ENCODE measurements at regions of chr7 and their contacts with region 1.

Region 1: GRCh38 chr7:121547544-121548092 is 151.5 kb upstream of the FAM3C start:
- DNase-seq: peak; percentile 76
- ATAC-seq: peak; percentile 47
- H3K4me3 ChIP-seq: no peak overlapping the region
- H3K27ac ChIP-seq: no peak overlapping the region
- H3K4me1 ChIP-seq: peaks cover 36% of the 10 kb centered on the region
- H3K27me3 ChIP-seq: no peaks in the 10 kb centered on the region
- CTCF ChIP-seq: peak; percentile 82

Region 2: GRCh38 chr7:121366852-121367431 is 180.7 kb before region 1 on chr7:
- CTCF ChIA-PET with region 1: interaction called, 7 read pairs
- POLR2A ChIA-PET with region 1: no interaction called
- intact Hi-C with region 1: loop called (anchors 1 kb)
- DNase-seq: peak; percentile 46
- ATAC-seq: peak; percentile 53
- H3K4me3 ChIP-seq: no peak overlapping the region
- H3K27ac ChIP-seq: no peak overlapping the region
- H3K4me1 ChIP-seq: peaks cover 9% of the 10 kb centered on the region
- H3K27me3 ChIP-seq: no peaks in the 10 kb centered on the region
- CTCF ChIP-seq: peak; percentile 86

Region 3: DNA sequence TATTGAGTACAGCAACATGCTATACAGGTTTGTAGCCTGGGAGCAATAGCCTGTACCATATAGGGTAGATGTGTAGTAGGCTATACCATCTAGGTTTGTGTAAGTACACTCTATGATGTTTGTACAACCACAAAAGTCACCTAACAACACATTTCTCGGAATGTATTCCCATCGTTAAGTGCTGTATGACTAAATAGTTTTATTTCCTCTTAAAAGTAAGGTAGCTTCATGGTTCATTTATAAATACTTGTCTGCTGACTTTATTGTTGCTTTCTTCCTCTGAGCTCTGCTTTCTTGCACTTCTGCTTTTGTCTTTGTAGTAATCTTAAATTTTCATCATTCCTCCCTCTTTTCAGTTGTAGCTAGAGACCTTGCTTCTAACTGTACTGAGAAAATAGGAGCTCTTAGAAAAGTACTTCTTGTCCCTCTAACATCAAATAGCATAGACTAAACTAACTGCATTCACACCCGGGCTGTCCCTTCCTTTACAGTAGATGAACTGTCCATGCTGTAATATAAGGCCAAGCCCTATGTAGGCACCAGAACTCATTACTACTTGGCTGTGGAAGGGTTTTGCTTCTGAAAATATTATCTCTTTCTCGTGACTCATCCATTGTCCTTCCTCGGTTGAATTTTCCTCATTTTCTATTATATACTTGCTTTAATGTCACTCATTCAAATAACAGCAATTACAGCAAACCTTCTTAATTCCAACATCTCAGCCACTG is 96.1 kb before region 1 on chr7:
- CTCF ChIA-PET with region 1: interaction called, 8 read pairs
- POLR2A ChIA-PET with region 1: no interaction called
- intact Hi-C with region 1: loop called (anchors 1 kb)
- DNase-seq: peak; percentile 36
- ATAC-seq: peak; percentile 72
- H3K4me3 ChIP-seq: no peak overlapping the region
- H3K27ac ChIP-seq: no peak overlapping the region
- H3K4me1 ChIP-seq: 0 out of 2 replicates have a peak, but pooled peaks cover 4% of the 10 kb centered on the region
- H3K27me3 ChIP-seq: no peaks in the 10 kb centered on the region
- CTCF ChIP-seq: no peak

Region 4: GRCh38 chr7:121493553-121493952 is 54.1 kb before region 1 on chr7:
- CTCF ChIA-PET with region 1: no interaction called
- POLR2A ChIA-PET with region 1: no interaction called
- intact Hi-C with region 1: loop called (anchors 2 kb)
- DNase-seq: no peak
- ATAC-seq: no peak
- H3K4me3 ChIP-seq: no peak overlapping the region
- H3K27ac ChIP-seq: no peak overlapping the region
- H3K4me1 ChIP-seq: peaks cover 18% of the 10 kb centered on the region
- H3K27me3 ChIP-seq: no peaks in the 10 kb centered on the region
- CTCF ChIP-seq: no peak; the same call in 1 of the 2 replicates

Region 5: GRCh38 chr7:121530227-121531174 is 17.1 kb before region 1 on chr7:
- CTCF ChIA-PET with region 1: interaction called, 3 read pairs
- POLR2A ChIA-PET with region 1: no interaction called
- intact Hi-C with region 1: loop called (anchors 1 kb)
- DNase-seq: peak; percentile 97
- ATAC-seq: peak; percentile 97
- H3K4me3 ChIP-seq: peak overlapping the region; percentile 54; the same call in 1 of the 2 replicates
- H3K27ac ChIP-seq: peak overlapping the region; percentile 98
- H3K4me1 ChIP-seq: peaks cover 28% of the 10 kb centered on the region
- H3K27me3 ChIP-seq: no peaks in the 10 kb centered on the region
- CTCF ChIP-seq: no peak

Region 6: DNA sequence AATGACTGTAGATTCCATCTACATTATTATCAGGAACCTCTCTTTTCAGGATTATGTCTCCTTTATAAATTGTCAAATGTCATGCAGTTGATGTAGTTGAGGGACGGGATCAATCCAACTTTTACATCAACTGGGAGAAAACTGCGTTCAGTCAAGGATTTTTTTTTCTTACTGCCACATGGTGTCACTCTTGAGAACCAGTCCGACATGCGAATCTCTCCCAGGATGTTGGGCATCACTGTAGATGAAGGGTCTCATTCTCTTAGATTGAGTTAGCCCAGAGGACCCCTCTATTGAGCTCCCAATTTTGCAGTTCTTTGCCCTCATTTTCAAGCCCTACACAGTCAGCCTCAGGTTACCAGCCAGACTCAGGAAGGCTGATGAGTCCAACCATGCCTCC is 205.1 kb after region 1 on chr7:
- CTCF ChIA-PET with region 1: no interaction called
- POLR2A ChIA-PET with region 1: no interaction called
- intact Hi-C with region 1: no loop called
- DNase-seq: peak; percentile 26
- ATAC-seq: no peak
- H3K4me3 ChIP-seq: no peak overlapping the region
- H3K27ac ChIP-seq: no peak overlapping the region
- H3K4me1 ChIP-seq: no peaks in the 10 kb centered on the region
- H3K27me3 ChIP-seq: peaks cover 58% of the 10 kb centered on the region
- CTCF ChIP-seq: peak; percentile 56